Heart right ventricle (tissue), 16 donors: ENCODE measurements at regions of chr13 and their contacts with region 1.

Region 1: GRCh38 chr13:27980280-27980998 is 8.1 kb downstream of the URAD start:
- DNase-seq: no peak
- ATAC-seq: no peak
- H3K4me3 ChIP-seq: no peak overlapping the region
- H3K27ac ChIP-seq: no peak overlapping the region
- H3K4me1 ChIP-seq: peaks cover 0 to 37% (median 26%) of the 10 kb centered on the region in 9 donors
- H3K27me3 ChIP-seq: peaks cover 64 to 99% (median 97%) of the 10 kb centered on the region in 7 donors
- CTCF ChIP-seq: no peak

Region 2: DNA sequence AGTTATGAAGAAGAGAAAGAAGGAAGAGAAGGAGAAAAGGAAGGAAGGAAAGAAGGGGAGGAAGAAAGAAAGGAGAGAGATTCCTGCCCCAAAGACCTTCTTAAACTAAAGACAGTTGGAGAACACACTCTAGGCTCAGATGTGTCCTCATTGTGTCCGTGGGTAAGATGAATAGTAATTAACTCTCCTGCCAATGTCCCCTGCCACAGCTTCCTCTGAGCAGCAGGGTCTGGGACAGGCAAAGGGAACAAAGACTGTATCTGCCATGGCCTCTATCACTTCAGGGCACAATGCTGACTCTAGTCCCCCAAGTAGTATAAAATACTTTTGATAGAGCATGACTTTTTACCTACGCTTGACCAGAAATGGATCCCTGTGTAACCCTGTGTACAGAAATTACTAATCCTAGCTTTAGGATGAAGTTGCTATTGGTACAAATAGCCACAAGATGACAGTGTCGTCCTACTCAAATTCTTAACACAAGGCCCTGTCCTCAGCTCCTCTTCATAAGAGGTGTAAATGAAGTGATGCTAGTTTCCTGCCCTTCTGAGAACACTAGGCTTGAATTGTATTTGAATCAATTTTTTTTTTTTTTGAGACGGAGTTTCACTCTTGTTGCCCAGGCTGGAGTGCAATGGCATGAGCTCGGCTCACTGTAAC is 1033.6 kb before region 1 on chr13:
- intact Hi-C with region 1: loop called in 1 of 10 experiments (anchors 10 kb)
- DNase-seq: no peak
- ATAC-seq: peak in 7 of 8 donors; percentile 65 to 84 (median 72)
- H3K4me3 ChIP-seq: no peak overlapping the region
- H3K27ac ChIP-seq: no peak overlapping the region
- H3K4me1 ChIP-seq: peaks cover 0 to 14% (median 0%) of the 10 kb centered on the region in 9 donors
- H3K27me3 ChIP-seq: no peaks in the 10 kb centered on the region
- CTCF ChIP-seq: peak; percentile 65 to 82 (median 76)

Region 3: GRCh38 chr13:28297341-28297740 is 316.9 kb after region 1 on chr13:
- intact Hi-C with region 1: no loop called
- DNase-seq: no peak
- ATAC-seq: no peak
- H3K4me3 ChIP-seq: no peak overlapping the region
- H3K27ac ChIP-seq: no peak overlapping the region
- H3K4me1 ChIP-seq: no peaks in the 10 kb centered on the region
- H3K27me3 ChIP-seq: no peaks in the 10 kb centered on the region
- CTCF ChIP-seq: no peak

Region 4: GRCh38 chr13:28429685-28430290 is 449.3 kb after region 1 on chr13:
- intact Hi-C with region 1: no loop called
- DNase-seq: no peak
- ATAC-seq: no peak
- H3K4me3 ChIP-seq: no peak overlapping the region
- H3K27ac ChIP-seq: no peak overlapping the region
- H3K4me1 ChIP-seq: peaks cover 0 to 63% (median 14%) of the 10 kb centered on the region in 9 donors
- H3K27me3 ChIP-seq: peaks cover 0 to 12% (median 0%) of the 10 kb centered on the region in 7 donors
- CTCF ChIP-seq: no peak